Sigmoid colon (tissue), 7 donors: ENCODE measurements at regions of chr4 and their contacts with region 1.

Region 1: GRCh38 chr4:17817020-17817419 is 6.2 kb downstream of the NCAPG start:
- DNase-seq: no peak
- H3K4me3 ChIP-seq: no peak overlapping the region
- H3K27ac ChIP-seq: no peak overlapping the region
- H3K4me1 ChIP-seq: no peaks in the 10 kb centered on the region
- H3K27me3 ChIP-seq: no peaks in the 10 kb centered on the region
- CTCF ChIP-seq: peak in 3 of 4 experiments; percentile 10 to 45 (median 43)
- EP300 ChIP-seq: no peak
- POLR2A ChIP-seq: no peak

Region 2: GRCh38 chr4:17747047-17747446 is 70.0 kb before region 1 on chr4:
- intact Hi-C with region 1: no loop called
- DNase-seq: no peak
- H3K4me3 ChIP-seq: no peak overlapping the region
- H3K27ac ChIP-seq: no peak overlapping the region
- H3K4me1 ChIP-seq: no peaks in the 10 kb centered on the region
- H3K27me3 ChIP-seq: no peaks in the 10 kb centered on the region
- CTCF ChIP-seq: no peak
- EP300 ChIP-seq: no peak
- POLR2A ChIP-seq: no peak

Region 3: DNA sequence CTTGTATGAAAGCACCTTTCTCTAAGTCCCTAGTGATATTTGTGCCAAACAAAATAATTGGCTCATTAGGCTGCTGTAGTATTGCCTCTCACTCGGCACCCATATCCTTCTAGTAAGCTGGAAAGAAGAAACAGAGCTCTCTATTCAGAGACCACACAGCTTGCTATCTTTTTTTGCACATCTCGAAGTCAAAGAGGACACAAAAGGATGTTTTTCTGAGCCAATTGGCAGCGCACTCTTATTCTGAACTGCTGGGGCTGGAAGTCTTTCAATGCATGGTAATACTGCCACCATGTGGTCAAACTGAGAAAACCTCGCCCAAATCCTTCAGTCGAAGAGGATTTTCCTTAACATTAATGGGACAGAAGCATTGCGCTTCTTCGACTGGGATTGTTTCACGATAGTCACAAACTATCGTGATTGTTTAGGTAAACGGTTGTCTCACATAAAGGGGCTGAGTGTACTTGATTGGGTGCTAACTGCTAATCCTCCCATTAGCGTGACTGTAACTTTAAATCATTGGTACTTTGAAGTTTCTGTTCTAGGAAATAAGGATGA is 776.5 kb after region 1 on chr4:
- intact Hi-C with region 1: loop called (anchors 5 kb)
- DNase-seq: peak; percentile 71
- H3K4me3 ChIP-seq: no peak overlapping the region
- H3K27ac ChIP-seq: no peak overlapping the region
- H3K4me1 ChIP-seq: peaks cover 0 to 7% (median 4%) of the 10 kb centered on the region in 4 donors
- H3K27me3 ChIP-seq: no peaks in the 10 kb centered on the region
- CTCF ChIP-seq: peak; percentile 39 to 75 (median 60)
- EP300 ChIP-seq: no peak
- POLR2A ChIP-seq: no peak